Naive thymus-derived CD4-positive, alpha-beta T cell (primary cell): ENCODE measurements at regions of chr19 and their contacts with region 1.

Region 1: GRCh38 chr19:39390755-39391592 is at the starts of genes MED29 and PAF1:
- DNase-seq: peak; percentile 76 to 99 (median 99)
- ATAC-seq: peak; percentile 95
- H3K4me3 ChIP-seq: peak within 1 kb of the TSS; percentile 84
- H3K4me3 Mint-ChIP-seq: peak within 1 kb of the TSS; percentile 89 to 99 (median 96)
- H3K27ac ChIP-seq: peak within 1 kb of the TSS; percentile 95
- H3K27ac Mint-ChIP-seq: peak within 1 kb of the TSS; percentile 95 to 100 (median 99)
- H3K4me1 ChIP-seq: peaks cover 16% of the 10 kb centered on the region in 2 donors
- H3K4me1 Mint-ChIP-seq: peaks cover 21 to 54% (median 38%) of the 10 kb centered on the region in 7 donors
- H3K27me3 ChIP-seq: no peaks in the 10 kb centered on the region
- H3K27me3 Mint-ChIP-seq: no peaks in the 10 kb centered on the region
- total RNA-seq, gene MED29: 44.2 to 57.2 (median 49.4) TPM
- total RNA-seq, gene PAF1: 42.8 to 104 (median 55.5) TPM

Region 2: DNA sequence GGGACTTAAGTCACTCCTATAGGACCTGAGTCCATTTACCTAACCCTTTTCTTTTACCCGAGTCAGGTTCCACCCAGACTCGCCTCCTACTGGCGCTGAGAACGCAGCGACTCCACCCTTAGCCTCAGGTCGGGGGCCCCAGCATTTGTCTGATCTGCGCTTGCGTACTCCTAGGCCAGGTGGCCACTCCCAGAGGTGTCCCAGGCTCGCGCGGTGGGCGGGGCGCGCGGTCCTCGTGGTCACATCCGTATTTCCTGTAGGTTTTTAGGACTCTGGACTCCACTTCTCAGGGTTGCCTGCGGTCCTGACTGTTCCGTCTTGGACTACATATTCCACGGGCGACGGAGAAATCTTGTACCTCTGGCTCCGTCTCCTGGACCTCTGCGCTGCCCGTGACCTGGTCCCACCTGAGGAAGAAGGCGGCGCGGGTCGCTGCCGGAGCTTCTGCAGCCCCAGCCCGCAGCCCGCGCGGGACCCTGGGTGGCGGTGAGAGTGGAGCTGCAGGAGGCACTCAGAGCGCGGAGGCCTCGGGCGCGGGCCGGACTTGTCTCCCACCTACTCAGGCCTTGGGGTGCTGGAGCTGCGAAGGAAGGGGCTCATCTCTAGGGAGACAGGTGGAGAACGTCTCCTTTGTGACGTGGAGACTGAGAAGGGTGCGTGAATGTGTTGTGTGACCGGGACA is 1600.6 kb before region 1 on chr19:
- CTCF ChIA-PET with region 1: no interaction called
- POLR2A ChIA-PET with region 1: no interaction called
- intact Hi-C with region 1: no loop called
- DNase-seq: no peak
- ATAC-seq: no peak
- H3K4me3 ChIP-seq: no peak overlapping the region
- H3K4me3 Mint-ChIP-seq: no peak overlapping the region
- H3K27ac ChIP-seq: no peak overlapping the region
- H3K27ac Mint-ChIP-seq: no peak overlapping the region
- H3K4me1 ChIP-seq: no peaks in the 10 kb centered on the region
- H3K4me1 Mint-ChIP-seq: no peaks in the 10 kb centered on the region
- H3K27me3 ChIP-seq: no peaks in the 10 kb centered on the region
- H3K27me3 Mint-ChIP-seq: no peaks in the 10 kb centered on the region

Region 3: DNA sequence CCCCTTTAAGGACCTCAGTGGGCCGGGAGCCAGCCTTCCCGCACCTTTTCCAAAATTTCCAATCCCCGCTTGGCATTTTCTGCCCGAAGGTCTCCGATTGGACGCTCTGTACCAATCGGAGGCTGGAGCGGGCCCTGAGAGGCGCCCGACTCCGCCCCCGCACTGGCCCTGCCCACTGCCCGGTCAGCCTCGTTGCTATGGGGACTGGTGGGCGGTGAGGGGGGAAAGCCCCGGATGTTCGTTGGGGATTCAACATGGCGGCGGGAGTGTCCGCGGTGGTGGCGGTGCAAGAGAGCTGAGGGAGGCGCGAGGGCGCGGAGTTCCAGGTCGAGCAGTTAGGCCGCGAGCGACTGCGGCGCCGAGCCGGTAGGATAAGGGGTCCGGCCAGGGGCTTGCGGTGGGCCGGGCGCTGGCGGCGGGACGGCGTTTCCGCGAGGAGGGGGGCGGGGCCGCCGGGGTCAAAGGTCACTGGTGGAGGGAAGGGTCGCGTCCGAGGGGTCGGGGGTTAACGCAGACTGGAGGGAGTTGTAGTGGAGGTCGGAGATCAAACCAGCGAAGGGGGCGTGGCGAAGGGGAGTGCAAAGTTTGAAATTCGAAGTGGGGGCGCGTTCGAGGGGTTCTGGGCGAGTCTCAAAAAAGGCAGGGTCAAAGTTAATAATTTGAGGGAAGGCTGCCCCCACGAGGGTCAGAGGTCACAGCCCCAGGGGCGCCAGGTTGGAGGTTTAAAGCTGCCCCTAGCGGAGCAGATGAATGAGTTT is 265.2 kb before region 1 on chr19 and contains the start of gene PAK4:
- CTCF ChIA-PET with region 1: no interaction called
- POLR2A ChIA-PET with region 1: interaction called, 3 read pairs
- intact Hi-C with region 1: loop called in 1 of 2 experiments (anchors 1 kb)
- DNase-seq: peak; percentile 89 to 99 (median 92)
- ATAC-seq: peak; percentile 99
- H3K4me3 ChIP-seq: peak within 1 kb of the TSS; percentile 61
- H3K4me3 Mint-ChIP-seq: peak within 1 kb of the TSS; percentile 90 to 98 (median 94)
- H3K27ac ChIP-seq: peak within 1 kb of the TSS; percentile 90
- H3K27ac Mint-ChIP-seq: peak within 1 kb of the TSS; percentile 92 to 99 (median 97)
- H3K4me1 ChIP-seq: peaks cover 0 to 10% of the 10 kb centered on the region in 2 donors
- H3K4me1 Mint-ChIP-seq: peaks cover 26 to 50% (median 37%) of the 10 kb centered on the region in 7 donors
- H3K27me3 ChIP-seq: no peaks in the 10 kb centered on the region
- H3K27me3 Mint-ChIP-seq: peaks cover 0 to 7% (median 0%) of the 10 kb centered on the region in 5 donors
- total RNA-seq, gene PAK4: 9.3 to 17.5 (median 12.7) TPM

Region 4: DNA sequence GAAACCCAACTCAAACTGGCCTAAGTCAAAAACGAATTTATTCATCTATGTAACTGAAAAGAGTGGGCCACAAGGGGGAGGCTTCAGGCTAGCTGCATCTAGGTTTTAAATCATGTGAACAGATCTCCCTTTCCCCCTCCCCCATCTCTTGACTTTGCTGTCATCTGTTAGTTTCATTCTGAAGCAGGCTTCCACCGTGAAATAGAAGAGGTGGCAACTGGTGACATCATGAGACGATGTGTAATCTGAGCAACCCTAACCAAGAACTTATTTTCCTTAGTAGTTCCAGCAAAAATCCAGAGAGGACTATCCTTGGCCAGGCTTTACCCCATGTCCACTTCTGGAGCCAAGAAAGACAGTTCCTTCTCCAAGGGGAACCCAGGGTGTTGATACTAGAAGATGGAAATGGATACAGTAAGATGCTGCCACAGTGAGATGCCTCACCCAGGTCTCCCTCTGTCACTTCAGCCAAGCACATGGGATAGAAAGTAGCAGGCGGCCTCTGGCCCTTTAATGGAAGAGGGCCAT is 39.4 kb before region 1 on chr19:
- CTCF ChIA-PET with region 1: no interaction called
- POLR2A ChIA-PET with region 1: no interaction called
- intact Hi-C with region 1: loop called in 1 of 2 experiments (anchors 2 kb)
- DNase-seq: peak in 4 of 9 donors; percentile 15 to 40 (median 25)
- ATAC-seq: peak; percentile 77
- H3K4me3 ChIP-seq: no peak overlapping the region
- H3K4me3 Mint-ChIP-seq: peak overlapping the region in 1 of 10 donors; percentile 24
- H3K27ac ChIP-seq: no peak overlapping the region
- H3K27ac Mint-ChIP-seq: peak overlapping the region in 2 of 9 donors; percentile 16 to 82
- H3K4me1 ChIP-seq: no peaks in the 10 kb centered on the region
- H3K4me1 Mint-ChIP-seq: peaks cover 22 to 50% (median 34%) of the 10 kb centered on the region in 7 donors
- H3K27me3 ChIP-seq: no peaks in the 10 kb centered on the region
- H3K27me3 Mint-ChIP-seq: no peaks in the 10 kb centered on the region

Region 5: GRCh38 chr19:39435499-39436349 is 44.8 kb after region 1 on chr19 and contains the start of gene RPS16:
- CTCF ChIA-PET with region 1: interaction called, 3 read pairs
- POLR2A ChIA-PET with region 1: interaction called, 53 read pairs
- intact Hi-C with region 1: loop called (anchors 1 kb)
- DNase-seq: peak; percentile 93 to 100 (median 98)
- ATAC-seq: peak; percentile 98
- H3K4me3 ChIP-seq: peak within 1 kb of the TSS; percentile 98
- H3K4me3 Mint-ChIP-seq: peak within 1 kb of the TSS; percentile 92 to 100 (median 98)
- H3K27ac ChIP-seq: peak within 1 kb of the TSS; percentile 97
- H3K27ac Mint-ChIP-seq: peak within 1 kb of the TSS; percentile 95 to 100 (median 99)
- H3K4me1 ChIP-seq: peaks cover 27% of the 10 kb centered on the region in 2 donors
- H3K4me1 Mint-ChIP-seq: peaks cover 20 to 53% (median 40%) of the 10 kb centered on the region in 7 donors
- H3K27me3 ChIP-seq: no peaks in the 10 kb centered on the region
- H3K27me3 Mint-ChIP-seq: peaks cover 0 to 5% (median 0%) of the 10 kb centered on the region in 5 donors
- total RNA-seq, gene RPS16: 2,281 to 4,335 (median 4,063) TPM

Region 6: DNA sequence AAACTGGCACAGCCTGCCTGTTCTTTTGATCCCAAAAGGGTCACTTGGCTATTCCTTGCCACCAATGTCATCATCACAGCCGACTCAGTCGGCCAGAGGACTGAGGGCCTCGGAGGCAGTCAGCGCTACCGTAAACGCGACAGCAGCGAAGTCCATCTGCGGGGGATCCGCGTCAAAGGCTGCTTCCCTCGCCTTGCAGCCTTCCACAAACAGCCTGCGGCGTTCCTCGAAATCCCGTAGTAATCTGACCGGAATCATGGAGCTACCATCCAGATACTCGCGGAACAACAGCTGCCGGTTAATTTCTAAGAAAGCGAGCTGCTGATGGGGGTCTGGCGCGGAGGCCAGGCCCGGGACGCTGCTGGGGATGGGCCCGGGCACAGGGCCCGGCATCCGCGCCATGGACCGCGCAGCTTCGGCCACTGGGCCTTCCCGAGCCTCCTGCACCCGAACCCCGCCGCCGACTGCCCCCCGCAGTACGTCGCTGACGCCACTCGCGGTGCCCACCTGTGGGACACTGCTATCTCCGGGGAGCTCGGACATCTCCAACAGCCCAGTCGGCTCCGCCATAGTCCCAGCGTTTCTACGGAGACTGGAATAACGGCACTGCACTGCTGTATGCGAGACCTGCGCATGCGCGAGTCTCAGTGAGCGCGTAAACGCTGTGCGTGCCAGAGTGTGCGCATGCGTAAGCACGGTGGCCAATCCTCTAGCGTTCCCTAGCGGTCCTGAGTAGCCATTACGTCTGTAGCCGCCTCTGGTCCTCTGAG is 141.4 kb after region 1 on chr19 and contains the start of gene EID2B:
- CTCF ChIA-PET with region 1: no interaction called
- POLR2A ChIA-PET with region 1: interaction called, 3 read pairs
- intact Hi-C with region 1: loop called (anchors 1 to 2 kb)
- DNase-seq: peak; percentile 91 to 95 (median 93)
- ATAC-seq: peak; percentile 99
- H3K4me3 ChIP-seq: peak within 1 kb of the TSS; percentile 92
- H3K4me3 Mint-ChIP-seq: peak within 1 kb of the TSS; percentile 87 to 96 (median 92)
- H3K27ac ChIP-seq: peak within 1 kb of the TSS; percentile 82
- H3K27ac Mint-ChIP-seq: peak within 1 kb of the TSS; percentile 74 to 95 (median 92)
- H3K4me1 ChIP-seq: peaks cover 9 to 15% of the 10 kb centered on the region in 2 donors
- H3K4me1 Mint-ChIP-seq: peaks cover 20 to 55% (median 32%) of the 10 kb centered on the region in 7 donors
- H3K27me3 ChIP-seq: no peaks in the 10 kb centered on the region
- H3K27me3 Mint-ChIP-seq: no peaks in the 10 kb centered on the region
- total RNA-seq, gene EID2B: 4.4 to 8.5 (median 6.2) TPM